ENCODE measurements at regions of chr16 and their contacts with region 1.

Region 1: GRCh38 chr16:46673320-46674013 is 15.5 kb downstream of the VPS35 start:
- DNase-seq: no peak
- H3K4me3 ChIP-seq: no peak overlapping the region
- H3K27ac ChIP-seq: no peak overlapping the region
- H3K27me3 ChIP-seq: no peaks in the 10 kb centered on the region
- CTCF ChIP-seq: peak; percentile 97

Region 2: GRCh38 chr16:46658925-46659324 is 14.5 kb before region 1 on chr16:
- CTCF ChIA-PET with region 1: interaction called, 45 read pairs
- POLR2A ChIA-PET with region 1: no interaction called
- DNase-seq: no peak
- H3K4me3 ChIP-seq: no peak overlapping the region
- H3K27ac ChIP-seq: no peak overlapping the region
- H3K27me3 ChIP-seq: no peaks in the 10 kb centered on the region
- CTCF ChIP-seq: no peak

Region 3: GRCh38 chr16:46789499-46790414 is 116.3 kb after region 1 on chr16:
- CTCF ChIA-PET with region 1: interaction called, 13 read pairs
- POLR2A ChIA-PET with region 1: no interaction called
- DNase-seq: no peak
- H3K4me3 ChIP-seq: peak overlapping the region; percentile 60
- H3K27ac ChIP-seq: peak overlapping the region; percentile 42
- H3K27me3 ChIP-seq: no peaks in the 10 kb centered on the region
- CTCF ChIP-seq: no peak

Region 4: DNA sequence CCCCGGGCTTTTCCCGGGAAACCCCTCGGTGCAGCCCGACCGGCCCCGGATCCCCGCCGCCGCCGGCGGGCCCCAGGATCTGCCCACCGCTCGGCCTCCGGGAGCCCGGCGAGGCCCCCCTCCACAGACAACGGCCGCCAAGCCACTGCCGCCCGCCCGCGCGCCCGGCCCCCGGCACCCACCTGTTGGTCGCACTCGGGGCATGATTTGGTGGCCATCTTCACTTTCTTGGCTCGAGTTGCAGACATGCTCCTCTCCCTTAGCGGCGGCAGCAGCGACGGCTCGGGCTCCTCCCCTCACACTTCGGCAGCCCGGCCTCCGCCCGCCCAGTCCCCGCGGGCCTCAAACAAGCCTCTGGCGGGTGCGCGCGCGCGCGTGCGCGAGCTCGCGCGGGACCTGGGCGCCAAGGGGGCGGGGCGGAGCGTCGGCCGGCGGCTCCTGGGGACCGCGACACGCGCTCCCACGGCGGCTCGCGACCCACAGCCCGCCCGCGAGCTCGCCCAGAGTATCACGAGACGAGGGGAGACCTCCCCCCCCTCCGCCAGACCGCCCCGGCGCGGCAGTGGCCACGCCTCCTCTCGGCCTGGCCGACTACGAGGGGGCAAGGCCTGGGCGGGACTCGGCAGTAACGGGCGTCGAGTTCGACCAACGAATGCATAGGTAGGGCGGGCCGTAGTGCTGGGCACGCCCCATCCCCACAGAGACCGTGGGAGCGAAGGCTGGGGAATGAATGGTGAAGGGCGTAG is 157.6 kb after region 1 on chr16 and contains the start of gene C16orf87:
- CTCF ChIA-PET with region 1: interaction called, 13 read pairs
- POLR2A ChIA-PET with region 1: no interaction called
- DNase-seq: peak; percentile 84
- H3K4me3 ChIP-seq: peak within 1 kb of the TSS; percentile 79
- H3K27ac ChIP-seq: peak within 1 kb of the TSS; percentile 40
- H3K27me3 ChIP-seq: no peaks in the 10 kb centered on the region
- CTCF ChIP-seq: no peak
- polyA plus RNA-seq, gene C16orf87: 16.8 and 21.7 TPM in 2 replicates

Region 5: DNA sequence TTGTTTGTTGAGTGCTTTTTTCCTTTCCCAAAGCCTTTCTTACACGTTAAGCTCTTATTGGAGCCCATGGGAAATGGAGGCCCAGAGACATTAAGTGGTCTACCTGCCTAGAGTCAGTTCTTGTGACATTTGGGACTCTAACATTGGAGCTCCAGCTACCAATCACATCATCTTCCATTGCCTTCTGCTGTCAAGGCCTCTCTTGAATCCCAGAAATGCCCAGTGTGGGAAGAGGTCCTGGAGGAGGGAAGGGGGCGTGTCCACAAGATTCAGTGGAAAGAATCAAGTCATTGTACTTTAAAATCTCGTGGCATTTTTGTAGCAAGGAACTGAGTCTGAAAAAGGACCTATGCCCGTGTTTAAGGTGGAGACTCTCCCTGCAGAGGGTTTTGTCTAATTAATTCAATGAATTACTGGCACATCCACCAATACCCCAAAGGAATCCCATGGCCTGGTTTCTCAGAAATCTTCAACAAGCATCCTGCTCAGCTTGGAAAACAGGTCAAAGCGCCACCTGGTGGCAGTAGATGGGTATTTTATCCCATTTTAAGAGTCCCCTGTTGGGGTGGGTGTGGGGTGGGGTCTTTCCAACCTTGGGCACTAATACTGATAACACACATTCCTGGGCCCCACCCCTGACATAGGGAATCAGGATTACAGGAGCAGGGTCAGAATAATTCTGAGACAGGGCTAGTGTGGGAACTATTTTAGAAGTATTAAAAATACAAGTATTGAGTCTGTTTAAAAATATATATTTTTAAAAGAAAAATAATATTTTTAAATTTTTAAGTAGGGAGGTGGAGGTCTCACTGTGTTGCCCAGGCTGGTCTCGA is 235.3 kb after region 1 on chr16:
- CTCF ChIA-PET with region 1: interaction called, 44 read pairs
- POLR2A ChIA-PET with region 1: no interaction called
- DNase-seq: peak; percentile 30
- H3K4me3 ChIP-seq: no peak overlapping the region
- H3K27ac ChIP-seq: no peak overlapping the region
- H3K27me3 ChIP-seq: no peaks in the 10 kb centered on the region
- CTCF ChIP-seq: peak; percentile 67

Region 6: DNA sequence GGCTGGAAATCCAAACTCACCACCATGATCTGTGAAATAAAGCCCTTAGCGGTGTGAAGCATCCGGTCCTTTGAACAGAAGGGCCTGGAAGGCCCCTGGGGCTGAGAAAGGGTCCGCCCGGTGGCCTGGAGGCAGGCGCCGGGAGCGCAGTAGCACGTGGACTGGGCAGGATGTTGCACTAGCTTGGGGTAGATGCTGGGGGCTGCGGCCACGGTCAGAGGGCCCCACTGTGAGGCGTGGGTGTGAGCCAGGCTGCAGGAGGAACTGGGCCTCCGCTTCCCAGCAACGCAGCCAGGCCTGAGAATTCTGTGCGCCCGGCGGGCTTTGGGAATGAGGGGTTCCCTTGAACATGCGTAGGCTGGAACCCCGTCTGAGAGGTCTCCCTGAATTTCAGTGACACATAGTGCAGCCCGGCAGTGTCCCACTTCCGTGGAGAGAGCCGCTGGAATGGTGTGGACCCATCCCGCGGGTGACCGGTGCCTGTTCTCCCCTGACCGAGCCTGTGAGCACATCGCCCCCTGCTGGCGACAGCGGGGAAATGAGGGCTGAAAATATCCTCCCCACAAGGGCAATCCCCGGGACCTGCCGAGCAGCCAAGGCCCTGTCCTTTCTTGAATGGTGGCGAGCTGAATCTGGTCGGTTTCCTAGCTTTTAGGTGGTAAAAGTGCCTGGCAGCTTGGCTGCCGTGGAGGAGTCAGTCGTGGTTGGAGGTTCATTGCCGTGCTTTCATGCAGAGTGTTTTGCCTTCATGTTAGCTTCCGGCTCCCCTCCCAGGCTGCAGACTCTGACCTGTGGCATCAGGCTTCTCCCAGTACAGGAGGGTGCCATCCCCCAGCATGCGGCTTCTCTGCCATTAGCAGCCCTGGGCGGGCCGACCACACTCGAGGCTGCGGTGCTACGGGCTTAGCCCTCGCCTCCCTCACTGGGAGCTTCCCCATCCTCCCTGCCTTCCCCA is 256.2 kb after region 1 on chr16:
- CTCF ChIA-PET with region 1: interaction called, 15 read pairs
- POLR2A ChIA-PET with region 1: no interaction called
- DNase-seq: peak; percentile 11
- H3K4me3 ChIP-seq: no peak overlapping the region
- H3K27ac ChIP-seq: no peak overlapping the region
- H3K27me3 ChIP-seq: no peaks in the 10 kb centered on the region
- CTCF ChIP-seq: peak; percentile 87

Measured in AG04450 (cell line).